ENCODE measurements at regions of chr9 and their contacts with region 1.

Region 1: GRCh38 chr9:121121582-121122087 is 46.9 kb downstream of the CNTRL start:
- DNase-seq: peak; percentile 91 to 98 (median 96)
- ATAC-seq: peak; percentile 95
- H3K4me3 ChIP-seq: peak overlapping the region; percentile 59
- H3K4me3 Mint-ChIP-seq: peak overlapping the region; percentile 83
- H3K27ac ChIP-seq: peak overlapping the region; percentile 49 to 72
- H3K27ac Mint-ChIP-seq: peak overlapping the region; percentile 88
- H3K4me1 ChIP-seq: peaks cover 22% of the 10 kb centered on the region
- H3K4me1 Mint-ChIP-seq: peaks cover 54% of the 10 kb centered on the region
- H3K27me3 ChIP-seq: no peaks in the 10 kb centered on the region
- H3K27me3 Mint-ChIP-seq: no peaks in the 10 kb centered on the region
- CTCF ChIP-seq: no peak

Region 2: DNA sequence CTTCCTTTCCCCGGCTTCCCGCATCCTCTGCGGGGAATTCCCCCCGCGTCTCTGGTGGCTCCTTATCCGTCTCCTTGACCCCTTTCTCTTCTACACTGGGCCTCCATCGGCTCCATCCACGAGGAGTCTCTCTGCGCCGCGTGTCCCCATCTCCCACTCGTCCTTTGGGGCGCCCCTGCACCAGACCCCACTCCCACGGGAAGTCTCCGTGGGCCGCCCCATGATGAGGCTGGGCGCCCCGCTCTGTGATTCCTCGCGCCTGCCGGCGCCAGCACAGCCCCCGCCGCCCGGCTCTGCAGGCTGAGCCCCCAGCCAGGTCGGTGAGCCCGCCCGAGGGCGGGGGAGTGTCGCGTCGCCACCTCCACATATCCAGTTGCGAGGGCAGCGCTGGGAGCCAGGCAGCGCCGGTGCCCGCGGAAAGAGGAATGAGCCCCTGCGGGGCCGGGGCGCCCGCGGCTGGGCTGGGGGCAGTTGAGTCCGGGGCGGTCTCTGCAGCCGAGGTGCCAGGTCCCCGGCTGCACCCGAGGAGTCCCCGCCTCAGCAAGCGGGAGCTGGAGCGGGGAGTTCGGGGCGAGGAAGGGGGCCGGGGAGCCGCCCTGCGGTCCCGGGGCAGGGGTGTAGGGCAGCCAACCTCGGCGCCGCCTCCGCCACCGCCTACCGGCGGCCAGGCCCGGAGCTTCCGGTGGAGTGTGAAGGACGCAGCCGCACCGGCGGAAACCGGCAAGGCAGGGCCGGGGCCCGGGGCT is 193.0 kb before region 1 on chr9:
- CTCF ChIA-PET with region 1: no interaction called
- POLR2A ChIA-PET with region 1: interaction called, 11 read pairs
- intact Hi-C with region 1: no loop called
- DNase-seq: peak; percentile 58 to 90 (median 78)
- ATAC-seq: peak; percentile 39
- H3K4me3 ChIP-seq: peak overlapping the region; percentile 90
- H3K4me3 Mint-ChIP-seq: peak overlapping the region; percentile 88
- H3K27ac ChIP-seq: peak overlapping the region; percentile 98 to 100
- H3K27ac Mint-ChIP-seq: peak overlapping the region; percentile 100
- H3K4me1 ChIP-seq: peaks cover 90% of the 10 kb centered on the region
- H3K4me1 Mint-ChIP-seq: peaks cover 91% of the 10 kb centered on the region
- H3K27me3 ChIP-seq: no peaks in the 10 kb centered on the region
- H3K27me3 Mint-ChIP-seq: no peaks in the 10 kb centered on the region
- CTCF ChIP-seq: no peak

Region 3: GRCh38 chr9:121074635-121075385 is 46.8 kb before region 1 on chr9 and contains the start of gene CNTRL:
- CTCF ChIA-PET with region 1: interaction called, 7 read pairs
- POLR2A ChIA-PET with region 1: interaction called, 8 read pairs
- intact Hi-C with region 1: loop called (anchors 2 to 5 kb)
- DNase-seq: peak; percentile 54 to 93 (median 78)
- ATAC-seq: peak; percentile 81
- H3K4me3 ChIP-seq: peak within 1 kb of the TSS; percentile 92
- H3K4me3 Mint-ChIP-seq: peak within 1 kb of the TSS; percentile 89
- H3K27ac ChIP-seq: peak within 1 kb of the TSS; percentile 75 to 81
- H3K27ac Mint-ChIP-seq: peak within 1 kb of the TSS; percentile 98
- H3K4me1 ChIP-seq: peaks cover 30% of the 10 kb centered on the region
- H3K4me1 Mint-ChIP-seq: peaks cover 54% of the 10 kb centered on the region
- H3K27me3 ChIP-seq: no peaks in the 10 kb centered on the region
- H3K27me3 Mint-ChIP-seq: no peaks in the 10 kb centered on the region
- CTCF ChIP-seq: no peak
- total RNA-seq, gene CNTRL: 35.1 to 38.1 TPM

Region 4: GRCh38 chr9:121133149-121133816 is 11.6 kb after region 1 on chr9:
- CTCF ChIA-PET with region 1: interaction called, 17 read pairs
- POLR2A ChIA-PET with region 1: interaction called, 119 read pairs
- intact Hi-C with region 1: loop called in 1 of 2 experiments (anchors 1 kb)
- DNase-seq: peak; percentile 64 to 88 (median 84)
- ATAC-seq: peak; percentile 99
- H3K4me3 ChIP-seq: peak overlapping the region; percentile 17
- H3K4me3 Mint-ChIP-seq: peak overlapping the region; percentile 67
- H3K27ac ChIP-seq: peak overlapping the region; percentile 42 to 55
- H3K27ac Mint-ChIP-seq: peak overlapping the region; percentile 94
- H3K4me1 ChIP-seq: peaks cover 16% of the 10 kb centered on the region
- H3K4me1 Mint-ChIP-seq: peaks cover 90% of the 10 kb centered on the region
- H3K27me3 ChIP-seq: no peaks in the 10 kb centered on the region
- H3K27me3 Mint-ChIP-seq: no peaks in the 10 kb centered on the region
- CTCF ChIP-seq: no peak

Region 5: GRCh38 chr9:121169094-121169601 is 47.5 kb after region 1 on chr9:
- CTCF ChIA-PET with region 1: interaction called, 11 read pairs
- POLR2A ChIA-PET with region 1: interaction called, 10 read pairs
- intact Hi-C with region 1: loop called in 1 of 2 experiments (anchors 2 kb)
- DNase-seq: peak in 7 of 14 experiments; percentile 1 to 60 (median 31)
- ATAC-seq: peak; percentile 95
- H3K4me3 ChIP-seq: no peak overlapping the region
- H3K4me3 Mint-ChIP-seq: peak overlapping the region; percentile 2
- H3K27ac ChIP-seq: peak overlapping the region; percentile 0 to 3
- H3K27ac Mint-ChIP-seq: peak overlapping the region; percentile 80
- H3K4me1 ChIP-seq: peaks cover 11% of the 10 kb centered on the region
- H3K4me1 Mint-ChIP-seq: peaks cover 27% of the 10 kb centered on the region
- H3K27me3 ChIP-seq: no peaks in the 10 kb centered on the region
- H3K27me3 Mint-ChIP-seq: no peaks in the 10 kb centered on the region
- CTCF ChIP-seq: peak; percentile 66